Psoas muscle (tissue), 8 donors: ENCODE measurements at regions of chr11 and their contacts with region 1.

Region 1: DNA sequence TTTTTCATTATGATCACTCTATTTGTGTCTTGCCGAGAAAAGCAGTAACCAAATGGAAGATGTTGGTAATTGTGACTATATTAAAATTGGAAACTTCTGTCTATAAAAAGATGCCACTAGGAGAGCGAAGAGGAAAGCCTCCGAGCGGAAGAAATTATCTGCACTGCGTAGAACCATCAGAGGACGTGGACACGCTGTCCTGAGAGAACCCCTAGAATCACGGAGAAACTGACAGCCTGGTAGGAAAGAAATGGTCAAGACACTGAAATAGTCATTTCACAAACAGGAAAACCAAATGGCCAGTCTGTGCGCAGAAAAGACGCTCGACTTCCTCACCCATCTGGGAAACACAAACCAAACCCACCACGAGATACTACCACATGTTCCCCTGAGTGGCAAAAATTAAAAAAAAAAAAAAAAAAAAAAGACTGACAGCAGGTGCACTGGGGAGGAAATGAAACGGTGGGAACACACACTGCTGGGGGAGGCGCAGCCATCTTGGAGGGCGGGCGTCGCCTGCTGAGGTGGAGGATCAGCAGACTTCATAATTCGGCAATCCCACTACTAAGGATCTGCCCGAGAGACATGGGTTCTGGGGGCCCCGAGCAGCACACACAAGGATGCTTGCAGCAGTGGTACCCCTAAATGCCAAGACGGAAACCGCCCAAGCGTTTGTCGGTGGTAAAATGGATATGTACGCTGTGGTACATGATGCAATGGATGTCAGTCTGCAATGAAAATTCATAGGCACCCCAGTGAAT is 21.3 kb downstream of the IFITM10 start:
- DNase-seq: no peak
- ATAC-seq: no peak
- H3K4me3 ChIP-seq: no peak overlapping the region
- H3K27ac ChIP-seq: no peak overlapping the region
- H3K4me1 ChIP-seq: no peaks in the 10 kb centered on the region
- H3K27me3 ChIP-seq: peaks cover 0 to 44% (median 14%) of the 10 kb centered on the region in 3 donors
- CTCF ChIP-seq: no peak

Region 2: DNA sequence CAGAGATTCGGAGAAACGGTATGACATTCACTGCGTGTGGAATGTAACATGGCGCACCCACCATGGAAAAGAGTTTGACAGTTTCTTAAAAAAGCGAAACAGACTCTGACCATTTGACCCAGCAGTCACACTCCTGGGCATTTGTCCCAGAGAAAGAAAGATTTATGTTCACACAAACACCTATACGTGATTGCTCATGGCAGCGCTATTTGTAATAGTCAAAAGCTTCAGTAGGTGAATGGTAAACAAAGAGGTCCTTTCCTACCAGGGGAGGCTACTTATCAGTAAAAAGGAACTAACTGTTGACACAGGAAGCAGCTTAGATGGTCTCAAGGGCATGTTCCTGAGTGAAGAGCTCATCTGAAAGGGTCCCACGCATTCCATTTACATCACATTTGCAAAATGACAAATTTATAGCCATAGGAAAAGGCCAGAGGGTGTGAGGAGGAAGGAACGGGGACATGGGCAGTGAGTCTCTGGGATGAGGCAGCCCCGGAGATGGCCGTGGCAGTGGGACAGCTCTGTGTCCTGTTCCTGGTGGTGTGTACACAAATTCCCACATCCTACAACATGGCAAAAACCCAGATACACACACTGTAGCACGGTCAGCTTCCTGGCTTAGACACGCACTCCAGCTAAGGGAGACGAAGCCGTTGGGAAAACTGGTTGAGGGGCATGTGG is 46.7 kb before region 1 on chr11:
- intact Hi-C with region 1: no loop called
- DNase-seq: no peak
- ATAC-seq: no peak
- H3K4me3 ChIP-seq: no peak overlapping the region
- H3K27ac ChIP-seq: no peak overlapping the region
- H3K4me1 ChIP-seq: no peaks in the 10 kb centered on the region
- H3K27me3 ChIP-seq: peaks cover 0 to 38% (median 2%) of the 10 kb centered on the region in 3 donors
- CTCF ChIP-seq: no peak

Region 3: DNA sequence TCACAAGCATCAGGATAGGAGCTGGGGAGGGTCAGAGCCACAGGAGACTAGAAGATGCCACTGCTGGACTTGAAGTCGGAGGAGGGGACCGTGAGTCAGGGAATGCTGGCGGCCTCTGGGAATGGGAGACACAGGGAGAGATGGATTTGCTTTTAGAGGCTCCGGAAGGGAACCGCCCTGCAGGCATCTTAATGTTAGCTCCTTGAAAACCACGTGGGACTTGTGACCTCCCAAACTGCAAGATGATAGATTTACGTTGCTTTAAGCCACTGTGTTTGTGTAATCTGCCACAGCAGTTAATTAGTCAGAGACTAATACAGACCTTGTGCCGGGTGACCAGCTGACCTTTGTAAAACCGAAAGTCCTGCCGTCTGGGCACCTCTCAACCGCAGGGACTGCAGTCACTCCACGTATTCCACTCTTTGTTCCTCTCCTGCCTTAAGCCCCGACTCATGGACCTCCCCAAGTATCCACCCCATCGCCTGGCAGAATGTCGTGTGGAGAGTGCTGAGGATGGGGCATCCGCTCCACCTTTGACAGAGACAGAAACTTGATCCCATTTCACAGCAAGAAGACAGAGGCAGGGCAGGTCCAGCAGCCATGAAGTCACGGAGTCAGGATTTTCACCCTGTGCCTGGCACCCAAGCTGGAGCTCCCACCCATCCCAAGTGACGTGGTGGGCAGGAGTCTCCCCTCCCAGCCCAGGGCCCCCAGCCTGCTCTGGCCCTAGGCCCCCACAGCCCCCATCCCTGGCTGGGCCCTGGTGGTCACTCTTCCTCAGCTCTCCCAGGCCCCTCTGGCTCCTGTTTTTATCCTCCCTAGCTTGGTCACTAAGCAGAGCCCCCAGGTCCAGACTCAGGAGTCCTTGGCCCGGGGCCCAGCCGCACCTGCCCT is 54.0 kb after region 1 on chr11:
- intact Hi-C with region 1: loop called in 1 of 2 experiments (anchors 5 kb)
- DNase-seq: no peak
- ATAC-seq: no peak
- H3K4me3 ChIP-seq: no peak overlapping the region
- H3K27ac ChIP-seq: no peak overlapping the region
- H3K4me1 ChIP-seq: no peaks in the 10 kb centered on the region
- H3K27me3 ChIP-seq: peaks cover 0 to 9% (median 0%) of the 10 kb centered on the region in 3 donors
- CTCF ChIP-seq: no peak

Region 4: DNA sequence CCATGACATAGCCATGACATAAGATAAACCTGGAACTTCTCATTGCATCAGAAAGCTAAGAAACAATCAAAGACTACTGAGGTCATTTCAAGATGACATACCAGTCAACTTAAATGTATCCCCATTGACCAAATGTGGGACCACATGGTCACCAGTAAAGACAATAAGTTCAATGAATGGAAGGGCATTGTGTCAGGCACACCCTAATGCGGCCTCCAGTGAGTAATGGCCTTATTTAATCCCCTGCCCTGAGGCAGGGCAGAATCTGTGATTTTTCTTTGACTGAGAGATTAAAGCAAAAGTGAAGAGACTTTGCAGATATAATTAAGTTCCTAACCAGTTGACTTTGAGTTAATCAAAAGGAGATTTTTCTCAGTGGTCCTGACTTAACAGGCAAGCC is 88.4 kb after region 1 on chr11:
- intact Hi-C with region 1: loop called in 1 of 2 experiments (anchors 5 kb)
- DNase-seq: no peak
- ATAC-seq: no peak
- H3K4me3 ChIP-seq: no peak overlapping the region
- H3K27ac ChIP-seq: no peak overlapping the region
- H3K4me1 ChIP-seq: no peaks in the 10 kb centered on the region
- H3K27me3 ChIP-seq: peaks cover 0 to 3% (median 0%) of the 10 kb centered on the region in 3 donors
- CTCF ChIP-seq: no peak